K562 (cell line): ENCODE measurements at regions of chr6 and their contacts with region 1.

Region 1: GRCh38 chr6:32108094-32108627 is 977 bp downstream of the TNXB start:
- DNase-seq: peak; percentile 66 to 75 (median 71)
- ATAC-seq: peak; percentile 52
- H3K4me3 ChIP-seq: no peak overlapping the region
- H3K27ac ChIP-seq: no peak overlapping the region
- H3K4me1 ChIP-seq: peaks cover 29 to 38% of the 10 kb centered on the region in 2 experiments
- H3K27me3 ChIP-seq: peaks cover 0 to 26% of the 10 kb centered on the region in 2 experiments; a peak in 2 of 5 replicates
- CTCF ChIP-seq: no peak
- EP300 ChIP-seq: no peak
- POLR2A ChIP-seq: no peak
- RAD21 ChIP-seq: no peak

Region 2: GRCh38 chr6:32076321-32076809 is 31.8 kb before region 1 on chr6:
- CTCF ChIA-PET with region 1: no interaction called
- POLR2A ChIA-PET with region 1: no interaction called
- in situ Hi-C with region 1: no loop called
- intact Hi-C with region 1: no loop called
- DNase-seq: no peak
- ATAC-seq: no peak
- H3K4me3 ChIP-seq: no peak overlapping the region
- H3K27ac ChIP-seq: no peak overlapping the region
- H3K4me1 ChIP-seq: peaks cover 9 to 11% of the 10 kb centered on the region in 2 experiments
- H3K27me3 ChIP-seq: peaks cover 31 to 48% of the 10 kb centered on the region in 2 experiments
- CTCF ChIP-seq: no peak
- EP300 ChIP-seq: no peak
- POLR2A ChIP-seq: no peak
- RAD21 ChIP-seq: no peak

Region 3: GRCh38 chr6:32092760-32093497 is 15.2 kb before region 1 on chr6:
- CTCF ChIA-PET with region 1: no interaction called
- POLR2A ChIA-PET with region 1: interaction called, 38 read pairs
- in situ Hi-C with region 1: no loop called
- intact Hi-C with region 1: no loop called
- DNase-seq: no peak
- ATAC-seq: no peak
- H3K4me3 ChIP-seq: no peak overlapping the region
- H3K27ac ChIP-seq: no peak overlapping the region
- H3K4me1 ChIP-seq: peaks cover 9 to 29% of the 10 kb centered on the region in 2 experiments
- H3K27me3 ChIP-seq: peaks cover 50 to 65% of the 10 kb centered on the region in 2 experiments
- CTCF ChIP-seq: no peak
- EP300 ChIP-seq: no peak
- POLR2A ChIP-seq: no peak
- RAD21 ChIP-seq: no peak